ENCODE measurements at regions of chr1 and their contacts with region 1.

Region 1: DNA sequence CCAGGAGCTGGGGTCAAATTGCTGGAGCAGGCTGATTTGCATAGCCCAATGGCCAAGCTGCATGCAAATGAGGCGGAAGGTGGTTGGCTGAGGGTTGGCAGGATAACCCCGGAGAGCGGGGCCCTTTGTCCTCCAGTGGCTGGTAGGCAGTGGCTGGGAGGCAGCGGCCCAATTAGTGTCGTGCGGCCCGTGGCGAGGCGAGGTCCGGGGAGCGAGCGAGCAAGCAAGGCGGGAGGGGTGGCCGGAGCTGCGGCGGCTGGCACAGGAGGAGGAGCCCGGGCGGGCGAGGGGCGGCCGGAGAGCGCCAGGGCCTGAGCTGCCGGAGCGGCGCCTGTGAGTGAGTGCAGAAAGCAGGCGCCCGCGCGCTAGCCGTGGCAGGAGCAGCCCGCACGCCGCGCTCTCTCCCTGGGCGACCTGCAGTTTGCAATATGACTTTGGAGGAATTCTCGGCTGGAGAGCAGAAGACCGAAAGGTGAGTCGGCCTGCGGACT is at the start of gene GADD45A:
- DNase-seq: peak; percentile 96 to 98
- H3K4me3 ChIP-seq: peak within 1 kb of the TSS; percentile 89
- H3K4me3 Mint-ChIP-seq: peak within 1 kb of the TSS; percentile 82
- H3K27ac Mint-ChIP-seq: peak within 1 kb of the TSS; percentile 94
- H3K4me1 ChIP-seq: peaks cover 51% of the 10 kb centered on the region
- H3K4me1 Mint-ChIP-seq: peaks cover 12% of the 10 kb centered on the region
- H3K27me3 ChIP-seq: no peaks in the 10 kb centered on the region
- H3K27me3 Mint-ChIP-seq: no peaks in the 10 kb centered on the region
- CTCF ChIP-seq: no peak
- total RNA-seq, gene GADD45A: 58.6 and 59.0 TPM in 2 replicates

Region 2: GRCh38 chr1:67535474-67535873 is 149.6 kb before region 1 on chr1:
- CTCF ChIA-PET with region 1: interaction called, 10 read pairs
- POLR2A ChIA-PET with region 1: interaction called, 5 read pairs
- intact Hi-C with region 1: loop called (anchors 1 kb)
- DNase-seq: peak; percentile 75 to 80
- H3K4me3 ChIP-seq: no peak overlapping the region
- H3K4me3 Mint-ChIP-seq: no peak overlapping the region
- H3K27ac Mint-ChIP-seq: no peak overlapping the region
- H3K4me1 ChIP-seq: peaks cover 29% of the 10 kb centered on the region
- H3K4me1 Mint-ChIP-seq: peaks cover 18% of the 10 kb centered on the region
- H3K27me3 ChIP-seq: no peaks in the 10 kb centered on the region
- H3K27me3 Mint-ChIP-seq: no peaks in the 10 kb centered on the region
- CTCF ChIP-seq: peak; percentile 79 to 81

Region 3: DNA sequence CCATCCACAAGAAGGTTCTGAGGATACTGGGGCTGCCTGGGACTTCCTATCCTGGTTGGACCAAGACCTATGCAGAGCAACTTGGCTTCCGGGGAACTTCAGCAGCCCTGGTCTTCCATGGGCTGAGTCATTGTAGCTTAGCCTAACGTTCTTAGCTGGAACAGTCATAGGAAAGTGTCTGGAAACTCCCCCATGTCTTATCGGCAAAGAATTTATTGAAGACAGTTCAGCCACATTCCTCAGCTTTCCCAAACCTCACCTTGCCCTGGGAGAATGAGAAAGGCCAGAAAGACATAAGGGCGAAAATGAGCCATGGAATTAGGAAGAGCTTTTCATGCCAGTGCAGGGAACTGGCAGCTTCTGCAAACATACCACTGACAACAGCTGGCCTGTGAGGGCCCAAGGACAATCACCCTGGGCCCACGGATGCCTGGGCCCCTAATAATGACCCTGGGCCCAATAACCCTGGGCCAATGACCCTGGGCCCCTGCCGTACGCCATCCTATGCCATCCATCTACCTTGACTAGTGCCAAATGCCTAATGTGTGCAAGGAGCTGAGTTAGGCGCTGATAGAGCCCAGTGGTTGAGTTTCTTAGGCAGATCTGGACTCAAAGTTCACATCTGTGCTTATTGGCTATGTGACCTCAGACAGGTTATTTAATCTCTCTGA is 114.5 kb before region 1 on chr1:
- CTCF ChIA-PET with region 1: interaction called, 7 read pairs
- POLR2A ChIA-PET with region 1: interaction called, 23 read pairs
- intact Hi-C with region 1: loop called (anchors 1 kb)
- DNase-seq: peak; percentile 71 to 81
- H3K4me3 ChIP-seq: no peak overlapping the region
- H3K4me3 Mint-ChIP-seq: peak overlapping the region; percentile 52
- H3K27ac Mint-ChIP-seq: peak overlapping the region; percentile 93
- H3K4me1 ChIP-seq: peaks cover 51% of the 10 kb centered on the region
- H3K4me1 Mint-ChIP-seq: peaks cover 38% of the 10 kb centered on the region
- H3K27me3 ChIP-seq: no peaks in the 10 kb centered on the region
- H3K27me3 Mint-ChIP-seq: no peaks in the 10 kb centered on the region
- CTCF ChIP-seq: no peak

Region 4: GRCh38 chr1:67646145-67647035 is 38.7 kb before region 1 on chr1:
- CTCF ChIA-PET with region 1: interaction called, 8 read pairs
- POLR2A ChIA-PET with region 1: interaction called, 9 read pairs
- intact Hi-C with region 1: loop called (anchors 5 kb)
- DNase-seq: peak in 1 of 2 experiments; percentile 61
- H3K4me3 ChIP-seq: no peak overlapping the region
- H3K4me3 Mint-ChIP-seq: no peak overlapping the region
- H3K27ac Mint-ChIP-seq: no peak overlapping the region
- H3K4me1 ChIP-seq: peaks cover 74% of the 10 kb centered on the region
- H3K4me1 Mint-ChIP-seq: peaks cover 6% of the 10 kb centered on the region
- H3K27me3 ChIP-seq: no peaks in the 10 kb centered on the region
- H3K27me3 Mint-ChIP-seq: no peaks in the 10 kb centered on the region
- CTCF ChIP-seq: no peak

Region 5: GRCh38 chr1:67732750-67733151 is 47.6 kb after region 1 on chr1:
- CTCF ChIA-PET with region 1: no interaction called
- POLR2A ChIA-PET with region 1: no interaction called
- intact Hi-C with region 1: no loop called
- DNase-seq: no peak
- H3K4me3 ChIP-seq: no peak overlapping the region
- H3K4me3 Mint-ChIP-seq: no peak overlapping the region
- H3K27ac Mint-ChIP-seq: no peak overlapping the region
- H3K4me1 ChIP-seq: 0 out of 2 replicates have a peak, but pooled peaks cover 1% of the 10 kb centered on the region
- H3K4me1 Mint-ChIP-seq: no peaks in the 10 kb centered on the region
- H3K27me3 ChIP-seq: no peaks in the 10 kb centered on the region
- H3K27me3 Mint-ChIP-seq: no peaks in the 10 kb centered on the region
- CTCF ChIP-seq: no peak

Region 6: GRCh38 chr1:67748630-67749029 is 63.5 kb after region 1 on chr1:
- CTCF ChIA-PET with region 1: no interaction called
- POLR2A ChIA-PET with region 1: interaction called, 3 read pairs
- intact Hi-C with region 1: loop called (anchors 2 kb)
- DNase-seq: peak; percentile 42 to 51
- H3K4me3 ChIP-seq: peak overlapping the region; percentile 9
- H3K4me3 Mint-ChIP-seq: peak overlapping the region; percentile 69
- H3K27ac Mint-ChIP-seq: peak overlapping the region; percentile 69
- H3K4me1 ChIP-seq: peaks cover 80% of the 10 kb centered on the region
- H3K4me1 Mint-ChIP-seq: peaks cover 30% of the 10 kb centered on the region
- H3K27me3 ChIP-seq: no peaks in the 10 kb centered on the region
- H3K27me3 Mint-ChIP-seq: no peaks in the 10 kb centered on the region
- CTCF ChIP-seq: no peak

Measured in Caco-2 (cell line).